ENCODE measurements at regions of chr2 and their contacts with region 1.

Region 1: DNA sequence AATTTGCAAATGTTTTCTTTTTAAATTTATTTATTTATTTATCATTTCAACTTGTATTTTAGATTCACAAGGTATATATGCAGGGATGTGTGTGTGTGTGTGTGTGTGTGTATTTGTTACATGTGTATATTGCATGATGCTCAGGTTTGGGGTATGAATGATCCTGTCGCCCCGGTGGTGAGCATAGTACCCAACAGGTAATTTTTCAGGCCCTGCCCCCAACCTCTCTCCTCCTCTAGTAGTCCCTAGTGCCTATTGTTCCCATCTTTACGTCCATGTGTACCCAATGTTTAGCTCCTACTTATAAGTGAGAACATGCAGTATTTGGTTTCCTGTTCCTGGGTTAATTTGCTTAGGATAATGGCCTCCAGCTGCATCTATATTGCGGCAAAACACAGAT is 33.0 kb upstream of the KIF5C start:
- DNase-seq: no peak
- H3K4me3 ChIP-seq: no peak overlapping the region
- H3K27ac ChIP-seq: no peak overlapping the region
- H3K4me1 ChIP-seq: no peaks in the 10 kb centered on the region
- H3K27me3 ChIP-seq: no peaks in the 10 kb centered on the region

Region 2: DNA sequence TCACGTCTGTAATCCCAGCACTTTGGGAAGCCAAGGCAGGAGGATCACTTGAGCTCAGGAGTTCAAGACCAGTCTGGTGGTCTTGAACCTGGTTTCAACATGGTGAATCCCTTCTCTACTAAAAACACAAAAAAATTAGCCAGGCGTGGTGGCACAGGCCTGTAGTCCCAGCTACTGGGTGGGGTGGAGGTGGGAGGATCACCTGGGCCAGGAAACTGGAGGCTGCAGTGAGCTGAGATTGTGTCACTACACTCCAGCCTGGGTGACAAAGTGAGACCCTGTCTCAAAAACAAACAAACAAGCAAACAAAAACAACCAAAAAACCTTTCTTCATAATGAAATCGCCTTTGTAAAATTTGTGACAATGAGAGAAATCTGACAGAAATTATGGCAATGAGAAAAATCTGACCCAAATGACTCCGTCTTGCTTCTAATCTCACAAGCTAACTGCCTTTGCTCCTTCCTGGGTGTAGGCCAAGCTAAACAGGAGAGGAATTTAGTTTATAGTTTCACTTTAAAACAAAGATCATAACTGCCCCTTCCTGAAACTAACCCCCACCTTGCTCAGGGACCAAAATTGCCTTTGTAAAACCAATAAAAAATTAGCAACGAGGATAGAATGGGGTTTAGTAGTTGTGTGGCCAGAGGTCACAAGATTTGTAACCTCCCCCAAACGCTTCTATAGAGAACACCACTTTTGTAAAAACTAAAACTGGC is 27.7 kb before region 1 on chr2:
- CTCF ChIA-PET with region 1: no interaction called
- POLR2A ChIA-PET with region 1: no interaction called
- DNase-seq: no peak
- H3K4me3 ChIP-seq: no peak overlapping the region
- H3K27ac ChIP-seq: no peak overlapping the region
- H3K4me1 ChIP-seq: peaks cover 0 to 3% (median 0%) of the 10 kb centered on the region in 4 experiments
- H3K27me3 ChIP-seq: peaks cover 2 to 17% (median 3%) of the 10 kb centered on the region in 5 experiments

Region 3: DNA sequence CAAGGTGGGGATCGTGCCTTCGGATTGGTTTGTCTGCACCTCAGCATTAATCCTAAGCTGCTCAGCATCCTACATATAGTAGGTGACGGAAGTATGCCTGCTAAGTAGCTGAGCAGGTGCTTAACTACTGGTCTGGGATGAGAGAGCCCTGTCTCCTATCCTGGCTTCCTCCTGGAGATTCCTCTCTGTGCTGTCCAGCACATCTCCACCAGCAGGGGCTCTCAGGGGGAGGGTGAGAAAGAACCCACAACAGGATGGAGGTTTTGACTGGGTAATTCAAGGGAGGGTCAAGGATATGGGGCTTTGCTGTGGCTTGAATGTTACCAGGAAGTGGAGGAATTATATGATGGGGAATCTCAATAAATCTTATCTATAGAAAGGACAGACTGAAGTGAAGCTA is 12.4 kb before region 1 on chr2:
- CTCF ChIA-PET with region 1: no interaction called
- POLR2A ChIA-PET with region 1: no interaction called
- DNase-seq: no peak
- H3K4me3 ChIP-seq: no peak overlapping the region
- H3K27ac ChIP-seq: no peak overlapping the region
- H3K4me1 ChIP-seq: no peaks in the 10 kb centered on the region
- H3K27me3 ChIP-seq: peaks cover 0 to 2% (median 0%) of the 10 kb centered on the region in 5 experiments

Region 4: GRCh38 chr2:148860037-148860436 is 18.0 kb after region 1 on chr2:
- CTCF ChIA-PET with region 1: interaction called, 3 read pairs
- POLR2A ChIA-PET with region 1: interaction called, 11 read pairs
- DNase-seq: no peak
- H3K4me3 ChIP-seq: no peak overlapping the region
- H3K27ac ChIP-seq: no peak overlapping the region
- H3K4me1 ChIP-seq: no peaks in the 10 kb centered on the region
- H3K27me3 ChIP-seq: peaks cover 0 to 4% (median 0%) of the 10 kb centered on the region in 5 experiments

Measured in common myeloid progenitor, CD34-positive (primary cell).